Right cardiac atrium (tissue), 5 donors: ENCODE measurements at regions of chr10 and their contacts with region 1.

Region 1: GRCh38 chr10:13299437-13300287 is at the start of gene PHYH:
- DNase-seq: peak; percentile 94 to 97 (median 97)
- ATAC-seq: peak; percentile 94 to 96
- H3K4me3 ChIP-seq: peak within 1 kb of the TSS; percentile 75
- H3K27ac ChIP-seq: peak within 1 kb of the TSS; percentile 95
- H3K4me1 ChIP-seq: peaks cover 2% of the 10 kb centered on the region
- H3K27me3 ChIP-seq: no peaks in the 10 kb centered on the region
- total RNA-seq, gene PHYH: 70.7 to 94.9 (median 88.9) TPM

Region 2: GRCh38 chr10:13092291-13093102 is 207.2 kb before region 1 on chr10:
- intact Hi-C with region 1: no loop called
- DNase-seq: no peak
- ATAC-seq: peak; percentile 55 to 59
- H3K4me3 ChIP-seq: no peak overlapping the region
- H3K27ac ChIP-seq: no peak overlapping the region
- H3K4me1 ChIP-seq: no peaks in the 10 kb centered on the region
- H3K27me3 ChIP-seq: no peaks in the 10 kb centered on the region

Region 3: GRCh38 chr10:13105184-13105583 is 194.5 kb before region 1 on chr10:
- intact Hi-C with region 1: no loop called
- DNase-seq: no peak
- ATAC-seq: no peak
- H3K4me3 ChIP-seq: no peak overlapping the region
- H3K27ac ChIP-seq: no peak overlapping the region
- H3K4me1 ChIP-seq: peaks cover 6% of the 10 kb centered on the region
- H3K27me3 ChIP-seq: no peaks in the 10 kb centered on the region

Region 4: DNA sequence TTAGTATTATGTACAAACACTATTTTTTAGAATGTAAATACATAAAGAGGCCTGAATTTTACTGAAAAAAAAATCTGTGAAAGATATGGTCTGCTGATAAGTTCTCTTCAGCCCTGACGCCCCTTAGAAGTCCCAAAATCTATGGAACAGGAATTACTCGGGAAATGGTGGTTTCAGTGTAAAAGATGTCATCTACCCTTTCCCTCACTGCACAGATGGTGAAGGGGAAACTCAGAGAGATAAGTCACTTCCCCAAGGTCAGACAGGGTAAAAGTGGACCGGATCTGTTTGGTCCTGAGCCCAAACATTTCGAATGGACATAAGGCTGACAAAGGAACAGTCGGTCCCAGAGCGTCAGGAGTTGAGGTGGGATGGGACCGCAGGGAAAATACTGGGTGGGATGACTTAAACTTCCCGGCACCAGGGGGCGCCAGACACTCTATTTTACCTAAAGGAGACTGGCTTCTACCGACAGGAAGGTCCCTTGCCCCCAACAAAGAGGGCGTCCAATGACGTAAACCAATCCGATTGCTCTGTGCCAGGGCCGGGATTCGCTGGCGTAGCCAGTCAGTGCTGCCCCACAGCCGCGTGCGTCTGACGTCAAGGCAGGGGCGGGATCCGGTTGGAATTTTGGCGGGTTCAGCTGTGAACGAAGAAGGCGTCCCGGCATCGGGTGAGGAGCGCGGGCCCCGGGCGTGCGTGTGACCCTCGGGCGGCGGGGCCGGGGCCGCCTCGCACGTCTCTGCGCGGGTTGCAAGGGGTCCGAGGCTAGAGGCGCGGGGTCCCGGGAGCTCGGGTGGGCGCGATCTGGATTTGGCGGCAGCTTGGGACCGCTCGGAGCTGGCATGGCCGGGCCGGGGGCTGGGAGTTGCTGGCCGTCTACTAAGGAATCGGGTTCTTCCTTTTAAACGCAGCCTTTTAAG is 138.5 kb before region 1 on chr10 and contains the start of gene MCM10:
- intact Hi-C with region 1: loop called in 2 of 4 experiments (anchors 5 to 10 kb)
- DNase-seq: peak; percentile 98 to 99 (median 98)
- ATAC-seq: peak; percentile 100
- H3K4me3 ChIP-seq: peak within 1 kb of the TSS; percentile 44
- H3K27ac ChIP-seq: no peak within 1 kb of the TSS
- H3K4me1 ChIP-seq: no peaks in the 10 kb centered on the region
- H3K27me3 ChIP-seq: no peaks in the 10 kb centered on the region
- total RNA-seq, gene MCM10: 0.23 to 0.35 (median 0.33) TPM in 3 of 4 donors, not detected in the other

Region 5: GRCh38 chr10:13219685-13220670 is 79.7 kb before region 1 on chr10:
- intact Hi-C with region 1: no loop called
- DNase-seq: no peak
- ATAC-seq: no peak
- H3K4me3 ChIP-seq: no peak overlapping the region
- H3K27ac ChIP-seq: no peak overlapping the region
- H3K4me1 ChIP-seq: no peaks in the 10 kb centered on the region
- H3K27me3 ChIP-seq: no peaks in the 10 kb centered on the region